ENCODE measurements at regions of chr5 and their contacts with region 1.

Region 1: DNA sequence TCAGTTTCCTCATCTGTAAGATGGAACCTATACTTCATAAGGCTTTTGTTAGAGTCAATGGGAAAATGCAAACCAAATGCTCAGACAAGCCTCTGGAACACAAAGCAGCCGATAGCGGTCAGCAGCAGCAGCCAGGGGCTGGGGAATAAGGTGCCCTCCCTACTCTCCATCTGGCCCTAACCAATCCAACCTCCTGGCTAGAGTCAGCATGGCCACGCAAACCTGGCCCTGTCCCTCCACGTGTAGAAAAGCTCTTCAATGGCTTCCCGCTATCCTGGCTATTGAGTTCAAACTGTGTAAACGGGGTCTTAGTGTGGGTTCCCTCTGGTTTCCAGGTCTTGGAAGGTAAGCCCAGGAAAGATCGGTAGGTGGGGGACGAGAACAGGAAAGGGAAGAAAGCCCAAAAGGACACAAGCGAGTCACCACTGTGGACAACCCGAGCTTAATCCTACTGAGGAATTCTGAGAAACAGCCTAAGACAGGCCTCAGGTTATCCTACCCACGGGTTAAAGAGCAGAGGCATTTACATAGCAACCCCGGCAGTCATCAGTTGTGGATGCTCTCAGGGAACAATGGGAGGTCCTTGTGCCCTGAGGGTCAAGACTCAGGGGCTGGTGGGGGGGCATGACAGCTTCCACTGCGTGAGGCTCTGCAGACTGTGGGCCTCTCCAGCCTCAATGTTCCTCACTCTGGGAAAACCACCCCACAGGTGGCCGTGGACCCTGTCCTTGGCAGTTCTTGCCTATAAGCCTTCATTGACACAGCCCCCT is 30.9 kb downstream of the FABP6 start:
- DNase-seq: no peak
- ATAC-seq: peak; percentile 28; the same call in 1 of the 2 replicates
- H3K4me3 ChIP-seq: no peak overlapping the region
- H3K27ac ChIP-seq: no peak overlapping the region
- H3K4me1 ChIP-seq: no peaks in the 10 kb centered on the region
- H3K27me3 ChIP-seq: no peaks in the 10 kb centered on the region
- CTCF ChIP-seq: no peak

Region 2: DNA sequence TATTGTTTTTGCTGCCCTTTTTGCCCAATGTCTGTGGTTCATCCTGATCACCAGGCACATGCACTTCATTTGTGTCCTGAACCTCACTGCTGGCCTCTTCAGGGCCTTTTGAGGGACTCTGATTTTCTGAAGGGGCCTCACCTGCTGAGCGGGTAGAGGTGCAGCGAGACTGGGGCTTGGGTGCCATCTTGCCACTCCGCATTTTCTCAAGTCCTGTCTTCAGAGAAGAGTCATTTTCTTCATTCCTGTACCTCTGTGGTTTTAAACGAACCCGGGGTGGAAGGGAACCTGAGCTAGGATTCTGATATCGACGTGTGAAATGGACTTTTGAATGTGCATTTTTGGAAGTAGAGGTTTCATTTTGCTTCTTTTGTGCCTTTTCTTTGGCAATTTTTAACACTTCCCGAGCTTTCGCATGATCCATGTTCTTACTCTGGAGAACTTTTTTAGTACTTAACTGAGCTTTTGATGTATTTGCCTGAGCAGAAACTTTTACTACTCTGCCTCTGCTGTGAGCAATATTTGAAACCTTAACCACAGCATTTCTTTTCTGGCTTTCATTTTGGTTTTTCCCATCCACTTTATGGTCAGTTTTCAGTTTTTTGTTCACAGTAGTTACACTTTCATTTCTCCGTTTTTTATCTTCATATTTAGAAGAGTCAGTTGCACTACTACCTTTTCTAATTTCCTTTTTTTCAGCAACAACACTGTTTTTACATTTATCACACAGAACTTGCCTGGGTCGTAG is 167.1 kb before region 1 on chr5:
- CTCF ChIA-PET with region 1: no interaction called
- POLR2A ChIA-PET with region 1: interaction called, 10 read pairs
- in situ Hi-C with region 1: no loop called
- intact Hi-C with region 1: no loop called
- DNase-seq: no peak
- ATAC-seq: no peak
- H3K4me3 ChIP-seq: no peak overlapping the region
- H3K27ac ChIP-seq: no peak overlapping the region
- H3K4me1 ChIP-seq: no peaks in the 10 kb centered on the region
- H3K27me3 ChIP-seq: no peaks in the 10 kb centered on the region
- CTCF ChIP-seq: no peak

Measured in Panc1 (cell line).